Natural killer cell (primary cell): ENCODE measurements at regions of chr5 and their contacts with region 1.

Region 1: GRCh38 chr5:137743031-137743640 is 7.2 kb upstream of the KLHL3 start:
- DNase-seq: peak in 1 of 2 donors; percentile 89
- ATAC-seq: peak; percentile 86 to 95 (median 92)
- H3K4me3 ChIP-seq: no peak overlapping the region
- H3K4me3 Mint-ChIP-seq: no peak overlapping the region
- H3K27ac ChIP-seq: no peak overlapping the region
- H3K27ac Mint-ChIP-seq: no peak overlapping the region
- H3K4me1 ChIP-seq: peaks cover 4% of the 10 kb centered on the region
- H3K4me1 Mint-ChIP-seq: peaks cover 0 to 6% of the 10 kb centered on the region in 2 donors
- H3K27me3 ChIP-seq: no peaks in the 10 kb centered on the region
- H3K27me3 Mint-ChIP-seq: no peaks in the 10 kb centered on the region
- CTCF ChIP-seq: peak; percentile 71

Region 2: GRCh38 chr5:137629646-137630045 is 113.5 kb before region 1 on chr5:
- intact Hi-C with region 1: loop called (anchors 1 kb)
- DNase-seq: peak in 1 of 2 donors; percentile 75
- ATAC-seq: peak; percentile 77 to 87 (median 79)
- H3K4me3 ChIP-seq: no peak overlapping the region
- H3K4me3 Mint-ChIP-seq: no peak overlapping the region
- H3K27ac ChIP-seq: no peak overlapping the region
- H3K27ac Mint-ChIP-seq: no peak overlapping the region
- H3K4me1 ChIP-seq: no peaks in the 10 kb centered on the region
- H3K4me1 Mint-ChIP-seq: no peaks in the 10 kb centered on the region
- H3K27me3 ChIP-seq: no peaks in the 10 kb centered on the region
- H3K27me3 Mint-ChIP-seq: no peaks in the 10 kb centered on the region
- CTCF ChIP-seq: peak; percentile 94

Region 3: DNA sequence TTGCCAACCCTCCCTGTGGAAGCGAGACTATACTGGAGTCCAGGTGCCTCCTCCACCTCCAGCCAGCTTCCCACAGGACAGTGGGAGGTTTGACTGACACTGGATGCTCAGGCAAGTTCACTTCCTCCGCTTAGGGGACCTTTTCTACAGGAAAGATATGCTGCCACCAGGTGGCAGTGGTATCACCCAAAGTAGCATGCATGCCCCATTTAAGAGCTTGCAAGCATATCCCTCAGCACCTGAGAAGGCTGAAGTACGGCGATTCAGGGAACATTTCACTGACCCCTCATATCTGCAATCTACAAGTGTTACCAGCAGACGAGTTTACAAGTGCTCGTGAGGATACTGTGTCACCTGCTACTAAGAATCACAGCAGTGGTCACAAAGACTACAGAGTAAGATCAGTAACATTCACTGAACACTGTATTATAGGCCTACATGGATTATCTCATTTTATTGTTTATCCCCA is 82.8 kb before region 1 on chr5:
- intact Hi-C with region 1: loop called (anchors 1 kb)
- DNase-seq: peak; percentile 50 to 86
- ATAC-seq: peak; percentile 72 to 87 (median 87)
- H3K4me3 ChIP-seq: no peak overlapping the region
- H3K4me3 Mint-ChIP-seq: no peak overlapping the region
- H3K27ac ChIP-seq: no peak overlapping the region
- H3K27ac Mint-ChIP-seq: no peak overlapping the region
- H3K4me1 ChIP-seq: no peaks in the 10 kb centered on the region
- H3K4me1 Mint-ChIP-seq: no peaks in the 10 kb centered on the region
- H3K27me3 ChIP-seq: no peaks in the 10 kb centered on the region
- H3K27me3 Mint-ChIP-seq: no peaks in the 10 kb centered on the region
- CTCF ChIP-seq: peak; percentile 63

Region 4: DNA sequence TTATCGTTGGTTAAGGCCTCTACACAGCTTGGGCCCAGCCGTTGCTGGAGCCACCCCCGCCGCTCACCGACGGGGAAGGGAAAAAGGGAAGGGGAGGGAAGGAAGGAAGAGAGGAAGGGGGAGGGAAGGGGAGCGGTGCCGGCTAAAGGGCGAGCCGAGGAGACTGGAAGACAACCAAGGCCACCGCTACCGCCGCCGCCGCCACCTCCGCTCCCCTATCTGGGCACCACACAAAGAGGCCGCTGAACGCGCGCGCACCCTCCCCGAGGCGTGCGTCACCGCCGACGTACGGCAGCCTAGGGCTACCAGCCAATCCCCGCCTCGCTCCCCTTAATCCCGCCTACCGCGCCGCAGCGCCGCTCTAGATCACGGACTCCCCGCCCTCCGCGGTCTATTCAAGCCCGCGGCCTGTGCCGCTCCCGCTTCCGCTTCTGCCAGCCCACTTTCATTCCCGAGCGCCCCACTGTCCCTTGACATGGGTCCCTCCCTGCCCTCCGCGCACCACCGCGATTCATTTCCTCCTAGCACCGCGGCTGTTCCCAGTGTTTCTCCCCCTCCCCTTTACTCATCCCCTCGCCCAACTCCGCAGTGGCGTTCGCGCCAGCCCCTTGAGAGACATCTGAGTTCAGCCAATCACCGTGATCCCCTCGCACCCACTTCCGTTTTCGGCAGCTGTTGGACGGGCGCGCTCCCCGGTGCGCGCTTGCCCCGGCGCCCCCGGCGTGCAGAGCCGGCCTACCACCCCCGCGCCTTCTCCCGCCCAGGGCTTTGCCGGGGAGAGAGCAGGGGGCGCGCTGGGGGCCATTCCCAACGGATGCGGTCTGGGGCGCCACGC is 11.2 kb after region 1 on chr5 and contains the start of gene HNRNPA0:
- intact Hi-C with region 1: no loop called
- DNase-seq: peak; percentile 96 to 99
- ATAC-seq: peak; percentile 81 to 94 (median 85)
- H3K4me3 ChIP-seq: peak within 1 kb of the TSS; percentile 77
- H3K4me3 Mint-ChIP-seq: peak within 1 kb of the TSS; percentile 97
- H3K27ac ChIP-seq: peak within 1 kb of the TSS; percentile 99
- H3K27ac Mint-ChIP-seq: peak within 1 kb of the TSS; percentile 100
- H3K4me1 ChIP-seq: peaks cover 14% of the 10 kb centered on the region
- H3K4me1 Mint-ChIP-seq: peaks cover 30 to 42% of the 10 kb centered on the region in 2 donors
- H3K27me3 ChIP-seq: no peaks in the 10 kb centered on the region
- H3K27me3 Mint-ChIP-seq: peaks cover 0 to 3% of the 10 kb centered on the region in 2 donors
- CTCF ChIP-seq: no peak
- total RNA-seq, gene HNRNPA0: 31.5 to 35.9 (median 33.5) TPM